HCT116 (cell line): ENCODE measurements at regions of chr1 and their contacts with region 1.

Region 1: DNA sequence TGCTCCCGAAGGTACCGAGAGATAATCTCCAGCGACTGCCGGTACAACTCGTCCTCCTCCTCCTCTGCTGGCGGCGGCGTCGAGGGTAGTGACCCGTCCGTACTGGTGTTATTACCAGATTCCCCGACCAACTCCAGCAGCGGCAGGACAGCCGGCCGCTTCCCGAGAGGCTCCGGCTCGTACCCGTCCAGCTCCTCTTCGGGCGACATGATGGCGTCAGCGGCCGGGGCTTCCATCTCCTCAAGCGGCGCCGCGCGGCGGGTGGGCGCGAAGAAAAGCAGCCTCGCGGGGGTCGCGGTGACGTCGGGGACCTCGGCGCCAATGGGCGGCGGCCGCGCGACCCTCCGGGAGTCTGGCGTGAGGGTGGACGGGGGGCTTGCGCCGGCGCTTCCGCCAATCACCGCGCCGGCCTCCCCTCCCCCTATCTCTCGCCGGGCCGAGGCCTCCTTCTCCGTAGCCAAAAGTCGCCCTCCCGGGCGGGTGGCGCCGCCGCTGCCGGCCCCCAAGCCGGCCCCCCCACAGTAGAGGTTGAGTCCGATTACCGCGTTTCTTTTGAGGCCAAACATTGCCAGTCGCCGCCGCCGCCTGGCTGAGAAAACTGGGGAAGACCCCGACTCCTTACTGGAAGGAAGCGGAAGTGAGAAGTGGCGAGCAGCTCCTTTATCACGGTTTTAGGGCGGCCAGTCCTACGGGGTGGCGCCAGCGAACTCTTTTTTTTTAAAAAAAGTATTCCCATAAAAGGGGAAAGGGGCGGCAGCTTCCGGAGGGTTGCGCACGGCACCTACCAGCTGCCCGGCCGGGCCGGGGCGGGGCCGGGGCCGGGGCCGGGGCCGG is at the start of gene MCL1:
- DNase-seq: peak; percentile 85
- ATAC-seq: peak; percentile 91
- H3K4me3 ChIP-seq: peak within 1 kb of the TSS; percentile 71 to 80
- H3K27ac ChIP-seq: peak within 1 kb of the TSS; percentile 92
- H3K4me1 ChIP-seq: peaks cover 26 to 51% of the 10 kb centered on the region in 2 experiments
- H3K27me3 ChIP-seq: no peaks in the 10 kb centered on the region
- CTCF ChIP-seq: no peak
- POLR2A ChIP-seq: peak; percentile 98
- RAD21 ChIP-seq: no peak
- total RNA-seq, gene MCL1: 146 TPM

Region 2: DNA sequence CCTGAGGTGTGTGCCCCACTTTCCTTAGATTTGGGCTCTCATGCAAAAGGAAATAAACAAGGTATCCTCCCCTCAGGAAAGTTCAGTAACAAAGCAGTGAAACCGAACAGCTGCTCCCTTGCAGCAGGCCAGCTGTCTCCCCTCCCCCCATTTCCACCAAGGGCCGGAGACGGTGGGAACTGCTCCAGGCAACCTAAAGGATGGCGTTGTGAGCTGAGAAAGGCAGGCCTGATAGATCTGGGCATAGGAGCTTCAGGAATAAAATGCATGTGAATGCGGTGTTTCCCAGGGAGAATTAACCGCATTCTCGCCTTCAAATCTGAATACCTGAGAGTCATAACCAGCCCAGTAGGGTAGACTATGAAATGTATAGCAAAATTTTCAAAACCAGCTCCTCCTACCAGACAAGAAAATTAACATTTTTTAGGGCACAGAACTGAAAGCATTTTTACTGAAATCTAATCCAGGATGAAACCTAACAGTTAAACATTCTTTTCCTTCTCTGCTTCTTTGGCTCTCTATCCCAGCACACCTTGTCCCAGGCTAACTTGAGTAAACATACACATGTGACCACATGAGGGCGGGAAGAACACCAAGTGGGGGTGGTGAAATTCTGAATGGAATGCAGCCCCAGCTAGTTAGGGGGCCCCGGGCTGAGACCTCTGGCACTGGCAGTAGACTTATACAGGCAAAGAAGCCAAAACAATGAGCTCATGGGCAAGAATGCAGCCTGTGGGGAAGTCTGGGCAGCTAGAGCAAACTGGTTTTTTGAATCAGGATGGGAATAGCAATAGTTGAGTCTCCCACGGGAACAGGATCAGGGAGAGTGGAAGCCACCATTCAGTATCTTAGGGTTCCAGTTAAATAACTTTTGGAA is 11.2 kb before region 1 on chr1:
- CTCF ChIA-PET with region 1: no interaction called
- POLR2A ChIA-PET with region 1: interaction called, 41 read pairs
- RAD21 ChIA-PET with region 1: no interaction called
- intact Hi-C with region 1: no loop called
- DNase-seq: no peak
- ATAC-seq: peak; percentile 58
- H3K4me3 ChIP-seq: no peak overlapping the region
- H3K27ac ChIP-seq: peak overlapping the region; percentile 52
- H3K4me1 ChIP-seq: peaks cover 58 to 70% of the 10 kb centered on the region in 2 experiments
- H3K27me3 ChIP-seq: no peaks in the 10 kb centered on the region
- CTCF ChIP-seq: no peak
- POLR2A ChIP-seq: no peak
- RAD21 ChIP-seq: no peak

Region 3: DNA sequence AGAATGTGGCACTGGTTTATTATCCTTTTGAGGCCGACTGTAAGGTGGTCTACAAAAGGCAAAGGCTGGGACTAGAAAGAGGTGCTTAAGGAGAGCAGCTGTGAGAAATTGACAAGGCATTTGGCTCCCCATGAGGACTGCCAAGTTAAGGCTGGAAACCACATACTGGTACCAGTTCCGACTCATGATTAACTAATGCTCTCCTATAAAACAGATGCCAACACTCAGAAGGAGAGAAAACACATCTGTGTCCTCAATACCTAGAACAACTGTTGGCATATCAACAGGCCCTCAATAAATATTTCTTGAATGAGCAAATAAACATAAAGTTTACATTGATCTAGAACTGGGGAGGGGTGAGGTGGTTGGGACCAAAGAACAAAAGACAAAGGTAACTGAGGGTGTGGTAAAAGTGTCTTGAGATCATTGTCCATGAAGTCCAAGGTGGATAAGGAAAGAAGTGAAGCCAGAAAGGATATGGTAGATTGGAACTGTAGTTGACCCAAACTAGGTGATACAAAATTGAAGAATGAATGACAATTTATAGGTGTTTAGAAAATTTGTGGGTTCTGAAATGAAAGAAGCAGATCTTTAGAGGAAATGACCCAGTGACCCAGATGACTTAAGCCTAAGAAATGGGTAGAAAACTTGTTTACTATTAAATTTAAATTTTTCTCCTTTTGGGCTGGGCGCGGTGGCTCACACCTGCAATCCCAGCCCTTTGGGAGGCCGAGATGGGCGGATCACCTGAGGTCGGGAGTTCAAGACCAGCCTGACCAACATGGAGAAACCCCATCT is 17.1 kb after region 1 on chr1:
- CTCF ChIA-PET with region 1: no interaction called
- POLR2A ChIA-PET with region 1: interaction called, 18 read pairs
- RAD21 ChIA-PET with region 1: no interaction called
- intact Hi-C with region 1: no loop called
- DNase-seq: no peak
- ATAC-seq: peak; percentile 52; the same call in 1 of the 2 replicates
- H3K4me3 ChIP-seq: no peak overlapping the region
- H3K27ac ChIP-seq: no peak overlapping the region
- H3K4me1 ChIP-seq: peaks cover 7 to 36% of the 10 kb centered on the region in 2 experiments; a peak in 3 of 4 replicates
- H3K27me3 ChIP-seq: no peaks in the 10 kb centered on the region
- CTCF ChIP-seq: no peak
- POLR2A ChIP-seq: no peak
- RAD21 ChIP-seq: no peak

Region 4: DNA sequence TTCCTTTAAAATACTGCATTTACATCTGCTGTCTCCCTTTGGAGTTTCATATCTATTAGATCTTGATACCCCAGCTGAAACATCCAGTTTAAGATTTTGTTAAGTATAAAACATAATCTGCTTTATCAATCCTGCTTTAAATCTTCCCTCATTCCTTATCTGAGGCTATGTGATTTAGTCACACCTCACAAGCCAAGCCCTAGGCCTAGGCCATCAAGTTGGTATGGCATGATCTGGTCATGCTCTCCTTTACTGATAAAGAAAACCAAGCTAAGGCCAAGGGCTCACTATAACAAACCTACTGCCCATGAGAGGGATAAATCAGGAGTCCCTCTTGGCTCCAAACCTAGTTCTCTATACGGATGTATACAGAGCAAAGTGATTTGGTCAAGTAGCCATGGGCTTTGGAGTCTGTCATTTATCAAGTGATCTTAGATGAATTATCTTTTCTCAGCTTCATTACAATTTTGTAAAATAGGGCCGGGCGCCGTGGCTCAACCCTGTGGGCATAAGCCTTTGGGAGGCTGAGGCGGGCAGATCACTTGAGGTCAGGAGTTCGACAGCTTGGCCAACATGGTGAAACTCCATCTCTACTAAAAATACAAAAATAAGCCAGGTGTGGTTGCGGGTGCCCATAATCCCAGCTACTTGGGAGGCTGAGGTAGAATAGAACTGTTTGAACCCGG is 27.4 kb after region 1 on chr1:
- CTCF ChIA-PET with region 1: interaction called, 4 read pairs
- POLR2A ChIA-PET with region 1: interaction called, 31 read pairs
- RAD21 ChIA-PET with region 1: no interaction called
- intact Hi-C with region 1: no loop called
- DNase-seq: no peak
- ATAC-seq: no peak
- H3K4me3 ChIP-seq: no peak overlapping the region
- H3K27ac ChIP-seq: no peak overlapping the region
- H3K4me1 ChIP-seq: peaks cover 20 to 39% of the 10 kb centered on the region in 2 experiments
- H3K27me3 ChIP-seq: no peaks in the 10 kb centered on the region
- CTCF ChIP-seq: no peak
- POLR2A ChIP-seq: no peak
- RAD21 ChIP-seq: no peak

Region 5: DNA sequence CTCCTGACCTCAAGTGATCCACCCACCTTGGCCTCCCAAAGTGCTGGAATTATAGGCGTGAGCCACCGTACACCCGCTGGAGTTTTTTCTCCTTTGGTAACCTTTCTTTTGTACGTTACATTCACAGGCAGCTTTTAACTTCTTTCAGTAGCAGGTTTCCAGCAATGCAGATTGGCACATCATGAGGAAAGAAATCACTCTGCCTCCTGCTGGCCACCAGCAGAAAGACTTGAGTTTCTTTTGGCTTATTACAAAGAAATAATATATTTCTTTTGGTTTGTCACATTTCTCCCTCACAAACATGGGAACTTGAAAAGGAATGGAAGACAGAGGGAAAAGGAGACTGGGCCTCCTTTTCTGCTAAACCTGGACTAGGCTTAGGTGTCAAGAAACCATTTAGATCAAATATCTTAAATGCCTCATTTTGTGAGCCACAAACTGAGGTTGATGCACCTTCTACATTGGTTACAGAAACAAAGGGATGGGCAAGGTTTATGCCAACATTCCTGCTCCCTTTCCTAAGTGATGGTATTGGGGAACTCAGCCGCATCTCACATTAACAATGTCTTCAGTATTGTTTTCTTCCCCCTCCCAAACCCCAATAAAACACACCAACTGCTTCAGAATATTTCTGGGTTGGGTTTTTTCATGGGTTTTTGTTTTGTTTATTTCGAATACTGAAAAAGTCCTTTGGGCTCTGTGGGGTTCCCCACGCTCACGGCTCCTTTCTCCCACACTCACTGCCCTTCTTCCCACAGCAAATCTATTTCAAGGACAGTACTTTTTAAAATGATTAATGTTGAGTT is 42.5 kb after region 1 on chr1:
- CTCF ChIA-PET with region 1: no interaction called
- POLR2A ChIA-PET with region 1: interaction called, 8 read pairs
- RAD21 ChIA-PET with region 1: no interaction called
- intact Hi-C with region 1: loop called (anchors 2 kb)
- DNase-seq: no peak
- ATAC-seq: no peak
- H3K4me3 ChIP-seq: no peak overlapping the region
- H3K27ac ChIP-seq: no peak overlapping the region
- H3K4me1 ChIP-seq: peaks cover 8 to 44% of the 10 kb centered on the region in 2 experiments
- H3K27me3 ChIP-seq: no peaks in the 10 kb centered on the region
- CTCF ChIP-seq: peak; percentile 56 to 71 (median 65); a peak in 5 of 6 replicates
- POLR2A ChIP-seq: no peak
- RAD21 ChIP-seq: peak; percentile 61

Region 6: DNA sequence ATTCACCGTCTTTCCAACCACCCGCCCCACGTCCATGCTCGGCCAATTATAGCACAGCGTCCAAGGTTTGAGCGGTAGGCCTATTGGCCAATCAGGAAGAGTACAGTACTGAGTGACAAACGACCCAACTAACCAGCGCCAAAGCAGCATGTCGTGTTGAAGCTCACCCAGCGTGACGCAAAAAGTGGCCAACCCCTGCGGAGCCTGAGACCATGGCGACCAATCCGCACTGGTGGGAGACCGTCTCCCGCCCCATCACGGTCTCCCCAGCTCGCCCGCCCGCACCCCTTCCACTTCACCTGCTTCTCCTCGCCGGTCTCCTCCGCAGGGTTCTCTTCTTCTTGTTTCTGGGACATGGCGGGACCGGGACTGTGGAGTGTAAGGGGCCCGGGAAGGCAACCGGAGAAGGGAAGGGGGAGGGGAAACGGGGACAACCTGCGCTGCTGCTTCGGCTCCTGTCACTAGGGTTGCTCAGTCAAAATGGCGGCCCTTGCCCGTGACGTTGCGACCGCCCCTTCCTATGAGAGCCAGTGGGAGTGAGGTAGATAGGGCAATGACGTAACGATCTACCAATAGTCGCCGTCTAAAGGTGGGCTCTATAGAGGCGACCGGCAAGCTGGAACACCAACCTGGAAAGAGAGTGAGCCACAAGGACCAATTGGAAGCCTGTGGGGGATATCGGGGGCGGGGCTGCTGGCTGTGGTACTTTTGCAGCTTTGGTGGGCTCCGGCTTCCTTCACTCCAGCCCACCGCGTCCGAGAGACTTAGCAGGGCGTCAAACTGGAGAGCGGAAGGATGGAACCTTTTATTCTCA is 50.1 kb after region 1 on chr1 and contains the start of gene ENSA:
- CTCF ChIA-PET with region 1: no interaction called
- POLR2A ChIA-PET with region 1: interaction called, 20 read pairs
- RAD21 ChIA-PET with region 1: interaction called in 1 of 2 experiments, 4 read pairs
- intact Hi-C with region 1: loop called (anchors 2 kb)
- DNase-seq: peak; percentile 99
- ATAC-seq: peak; percentile 92
- H3K4me3 ChIP-seq: peak within 1 kb of the TSS; percentile 65 to 79
- H3K27ac ChIP-seq: peak within 1 kb of the TSS; percentile 73
- H3K4me1 ChIP-seq: peaks cover 9 to 29% of the 10 kb centered on the region in 2 experiments
- H3K27me3 ChIP-seq: no peaks in the 10 kb centered on the region
- CTCF ChIP-seq: no peak
- POLR2A ChIP-seq: peak; percentile 55
- RAD21 ChIP-seq: no peak
- total RNA-seq, gene ENSA: 130 TPM

Region 7: DNA sequence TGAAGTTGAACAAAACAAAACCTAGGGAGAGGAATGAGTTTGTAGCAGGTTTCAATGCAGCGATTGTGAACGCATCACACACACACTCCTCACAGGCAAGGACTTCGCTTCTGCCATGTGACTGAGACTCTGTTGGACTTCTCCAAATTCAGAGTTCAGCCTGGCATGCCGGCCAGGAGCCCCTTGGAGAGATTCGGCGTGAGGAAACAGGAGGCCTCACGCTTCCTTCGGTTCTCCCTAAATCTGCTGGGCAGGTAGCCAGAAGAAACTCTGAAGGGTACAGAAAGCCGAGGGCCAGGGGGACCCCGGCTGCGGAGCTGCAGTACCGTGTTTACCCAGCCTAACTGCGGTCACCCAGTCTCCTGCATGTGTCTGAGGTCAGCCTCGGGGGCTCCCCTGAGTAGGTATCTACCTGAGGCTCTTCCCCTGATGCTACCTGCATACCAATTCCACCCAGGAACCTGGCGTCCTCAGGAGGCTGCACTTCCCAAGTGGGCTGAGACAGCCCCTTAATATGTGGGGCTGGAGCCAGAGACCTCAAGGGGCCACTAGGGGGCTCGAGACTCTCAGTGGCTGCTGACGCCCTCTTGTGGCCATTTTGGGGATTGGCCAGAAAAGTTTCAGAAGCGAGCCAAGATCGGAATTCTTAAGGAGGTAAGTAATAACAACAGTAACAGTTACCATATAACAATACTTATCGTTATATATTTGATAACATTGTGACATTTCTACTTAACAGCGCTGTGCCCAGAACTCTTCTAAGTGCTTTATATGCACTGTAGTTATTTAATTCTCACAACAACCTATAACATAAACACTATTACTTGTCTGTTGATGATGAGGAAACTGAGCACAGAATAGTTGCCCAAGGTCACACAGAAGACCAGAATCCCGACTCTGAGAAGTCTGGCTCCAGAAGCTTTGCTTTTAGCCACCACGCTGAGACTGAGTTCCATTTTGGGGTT is 400.2 kb after region 1 on chr1:
- CTCF ChIA-PET with region 1: no interaction called
- POLR2A ChIA-PET with region 1: interaction called, 4 read pairs
- RAD21 ChIA-PET with region 1: no interaction called
- intact Hi-C with region 1: loop called (anchors 5 kb)
- DNase-seq: peak; percentile 78
- ATAC-seq: peak; percentile 42
- H3K4me3 ChIP-seq: no peak overlapping the region
- H3K27ac ChIP-seq: peak overlapping the region; percentile 92
- H3K4me1 ChIP-seq: peaks cover 71 to 83% of the 10 kb centered on the region in 2 experiments
- H3K27me3 ChIP-seq: no peaks in the 10 kb centered on the region
- CTCF ChIP-seq: peak in 2 of 3 experiments; percentile 100; a peak in 4 of 6 replicates
- POLR2A ChIP-seq: no peak
- RAD21 ChIP-seq: no peak